Naive thymus-derived CD4-positive, alpha-beta T cell (primary cell): ENCODE measurements at regions of chr1 and their contacts with region 1.

Region 1: GRCh38 chr1:108746372-108747205 is at the start of gene STXBP3:
- DNase-seq: peak; percentile 98 to 100 (median 99)
- ATAC-seq: peak; percentile 97
- H3K4me3 ChIP-seq: peak within 1 kb of the TSS; percentile 76
- H3K4me3 Mint-ChIP-seq: peak within 1 kb of the TSS; percentile 90 to 100 (median 97)
- H3K27ac ChIP-seq: peak within 1 kb of the TSS; percentile 98
- H3K27ac Mint-ChIP-seq: peak within 1 kb of the TSS; percentile 93 to 100 (median 98)
- H3K4me1 ChIP-seq: peaks cover 3 to 6% of the 10 kb centered on the region in 2 donors
- H3K4me1 Mint-ChIP-seq: peaks cover 26 to 47% (median 41%) of the 10 kb centered on the region in 7 donors
- H3K27me3 ChIP-seq: no peaks in the 10 kb centered on the region
- H3K27me3 Mint-ChIP-seq: peaks cover 0 to 5% (median 0%) of the 10 kb centered on the region in 5 donors
- total RNA-seq, gene STXBP3: 46.8 to 75.2 (median 54.0) TPM

Region 2: GRCh38 chr1:108643492-108644335 is 102.9 kb before region 1 on chr1:
- CTCF ChIA-PET with region 1: no interaction called
- POLR2A ChIA-PET with region 1: interaction called, 3 read pairs
- intact Hi-C with region 1: loop called (anchors 1 to 2 kb)
- DNase-seq: peak in 7 of 9 donors; percentile 59 to 78 (median 67)
- ATAC-seq: peak; percentile 45
- H3K4me3 ChIP-seq: no peak overlapping the region
- H3K4me3 Mint-ChIP-seq: peak overlapping the region in 9 of 10 donors; percentile 4 to 70 (median 47)
- H3K27ac ChIP-seq: peak overlapping the region; percentile 71
- H3K27ac Mint-ChIP-seq: peak overlapping the region; percentile 68 to 100 (median 98)
- H3K4me1 ChIP-seq: peaks cover 49 to 52% of the 10 kb centered on the region in 2 donors
- H3K4me1 Mint-ChIP-seq: peaks cover 55 to 81% (median 75%) of the 10 kb centered on the region in 7 donors
- H3K27me3 ChIP-seq: no peaks in the 10 kb centered on the region
- H3K27me3 Mint-ChIP-seq: no peaks in the 10 kb centered on the region

Region 3: GRCh38 chr1:108708691-108709660 is 37.6 kb before region 1 on chr1:
- CTCF ChIA-PET with region 1: no interaction called
- POLR2A ChIA-PET with region 1: interaction called, 3 read pairs
- intact Hi-C with region 1: loop called (anchors 1 kb)
- DNase-seq: peak; percentile 24 to 65 (median 54)
- ATAC-seq: peak; percentile 87
- H3K4me3 ChIP-seq: no peak overlapping the region
- H3K4me3 Mint-ChIP-seq: peak overlapping the region in 2 of 10 donors; percentile 15 to 38
- H3K27ac ChIP-seq: no peak overlapping the region
- H3K27ac Mint-ChIP-seq: peak overlapping the region in 3 of 9 donors; percentile 1 to 38 (median 2)
- H3K4me1 ChIP-seq: peaks cover 21 to 24% of the 10 kb centered on the region in 2 donors
- H3K4me1 Mint-ChIP-seq: peaks cover 7 to 44% (median 33%) of the 10 kb centered on the region in 7 donors
- H3K27me3 ChIP-seq: no peaks in the 10 kb centered on the region
- H3K27me3 Mint-ChIP-seq: peaks cover 0 to 20% (median 0%) of the 10 kb centered on the region in 5 donors

Region 4: GRCh38 chr1:108877348-108878159 is 131.0 kb after region 1 on chr1:
- CTCF ChIA-PET with region 1: no interaction called
- POLR2A ChIA-PET with region 1: no interaction called
- intact Hi-C with region 1: loop called (anchors 1 kb)
- DNase-seq: peak in 1 of 9 donors; percentile 0
- ATAC-seq: no peak
- H3K4me3 ChIP-seq: peak overlapping the region; percentile 68
- H3K4me3 Mint-ChIP-seq: peak overlapping the region; percentile 88 to 96 (median 92)
- H3K27ac ChIP-seq: peak overlapping the region; percentile 29
- H3K27ac Mint-ChIP-seq: peak overlapping the region in 7 of 9 donors; percentile 2 to 87 (median 58)
- H3K4me1 ChIP-seq: peaks cover 0 to 4% of the 10 kb centered on the region in 2 donors
- H3K4me1 Mint-ChIP-seq: peaks cover 0 to 27% (median 12%) of the 10 kb centered on the region in 7 donors
- H3K27me3 ChIP-seq: no peaks in the 10 kb centered on the region
- H3K27me3 Mint-ChIP-seq: peaks cover 3 to 17% (median 6%) of the 10 kb centered on the region in 5 donors

Region 5: GRCh38 chr1:108963052-108963686 is 216.6 kb after region 1 on chr1 and contains the start of gene CLCC1:
- CTCF ChIA-PET with region 1: no interaction called
- POLR2A ChIA-PET with region 1: no interaction called
- intact Hi-C with region 1: loop called (anchors 2 kb)
- DNase-seq: peak; percentile 78 to 92 (median 89)
- ATAC-seq: peak; percentile 97
- H3K4me3 ChIP-seq: peak within 1 kb of the TSS; percentile 76
- H3K4me3 Mint-ChIP-seq: peak within 1 kb of the TSS; percentile 87 to 94 (median 90)
- H3K27ac ChIP-seq: peak within 1 kb of the TSS; percentile 85
- H3K27ac Mint-ChIP-seq: peak within 1 kb of the TSS; percentile 78 to 97 (median 92)
- H3K4me1 ChIP-seq: peaks cover 11 to 16% of the 10 kb centered on the region in 2 donors
- H3K4me1 Mint-ChIP-seq: peaks cover 21 to 48% (median 37%) of the 10 kb centered on the region in 7 donors
- H3K27me3 ChIP-seq: no peaks in the 10 kb centered on the region
- H3K27me3 Mint-ChIP-seq: peaks cover 0 to 15% (median 0%) of the 10 kb centered on the region in 5 donors
- total RNA-seq, gene CLCC1: 15.4 to 34.6 (median 25.2) TPM

Region 6: GRCh38 chr1:109075531-109076490 is 329.2 kb after region 1 on chr1 and contains the start of gene TAF13:
- CTCF ChIA-PET with region 1: no interaction called
- POLR2A ChIA-PET with region 1: interaction called, 5 read pairs
- intact Hi-C with region 1: loop called in 1 of 2 experiments (anchors 1 kb)
- DNase-seq: peak; percentile 75 to 89 (median 84)
- ATAC-seq: peak; percentile 100
- H3K4me3 ChIP-seq: peak within 1 kb of the TSS; percentile 80
- H3K4me3 Mint-ChIP-seq: peak within 1 kb of the TSS; percentile 89 to 99 (median 98)
- H3K27ac ChIP-seq: peak within 1 kb of the TSS; percentile 92
- H3K27ac Mint-ChIP-seq: peak within 1 kb of the TSS; percentile 95 to 100 (median 99)
- H3K4me1 ChIP-seq: peaks cover 5 to 8% of the 10 kb centered on the region in 2 donors
- H3K4me1 Mint-ChIP-seq: peaks cover 13 to 28% (median 20%) of the 10 kb centered on the region in 7 donors
- H3K27me3 ChIP-seq: no peaks in the 10 kb centered on the region
- H3K27me3 Mint-ChIP-seq: no peaks in the 10 kb centered on the region
- total RNA-seq, gene TAF13: 11.0 to 23.6 (median 17.6) TPM

Region 7: GRCh38 chr1:109112652-109113285 is 366.2 kb after region 1 on chr1:
- CTCF ChIA-PET with region 1: no interaction called
- POLR2A ChIA-PET with region 1: no interaction called
- intact Hi-C with region 1: loop called (anchors 1 kb)
- DNase-seq: peak; percentile 75 to 93 (median 85)
- ATAC-seq: peak; percentile 75
- H3K4me3 ChIP-seq: peak overlapping the region; percentile 68
- H3K4me3 Mint-ChIP-seq: peak overlapping the region; percentile 78 to 93 (median 88)
- H3K27ac ChIP-seq: peak overlapping the region; percentile 68
- H3K27ac Mint-ChIP-seq: peak overlapping the region; percentile 84 to 96 (median 92)
- H3K4me1 ChIP-seq: peaks cover 16 to 21% of the 10 kb centered on the region in 2 donors
- H3K4me1 Mint-ChIP-seq: peaks cover 23 to 40% (median 28%) of the 10 kb centered on the region in 7 donors
- H3K27me3 ChIP-seq: no peaks in the 10 kb centered on the region
- H3K27me3 Mint-ChIP-seq: peaks cover 0 to 41% (median 0%) of the 10 kb centered on the region in 5 donors